Thyroid gland (tissue), 4 donors: ENCODE measurements at regions of chr1 and their contacts with region 1.

Region 1: DNA sequence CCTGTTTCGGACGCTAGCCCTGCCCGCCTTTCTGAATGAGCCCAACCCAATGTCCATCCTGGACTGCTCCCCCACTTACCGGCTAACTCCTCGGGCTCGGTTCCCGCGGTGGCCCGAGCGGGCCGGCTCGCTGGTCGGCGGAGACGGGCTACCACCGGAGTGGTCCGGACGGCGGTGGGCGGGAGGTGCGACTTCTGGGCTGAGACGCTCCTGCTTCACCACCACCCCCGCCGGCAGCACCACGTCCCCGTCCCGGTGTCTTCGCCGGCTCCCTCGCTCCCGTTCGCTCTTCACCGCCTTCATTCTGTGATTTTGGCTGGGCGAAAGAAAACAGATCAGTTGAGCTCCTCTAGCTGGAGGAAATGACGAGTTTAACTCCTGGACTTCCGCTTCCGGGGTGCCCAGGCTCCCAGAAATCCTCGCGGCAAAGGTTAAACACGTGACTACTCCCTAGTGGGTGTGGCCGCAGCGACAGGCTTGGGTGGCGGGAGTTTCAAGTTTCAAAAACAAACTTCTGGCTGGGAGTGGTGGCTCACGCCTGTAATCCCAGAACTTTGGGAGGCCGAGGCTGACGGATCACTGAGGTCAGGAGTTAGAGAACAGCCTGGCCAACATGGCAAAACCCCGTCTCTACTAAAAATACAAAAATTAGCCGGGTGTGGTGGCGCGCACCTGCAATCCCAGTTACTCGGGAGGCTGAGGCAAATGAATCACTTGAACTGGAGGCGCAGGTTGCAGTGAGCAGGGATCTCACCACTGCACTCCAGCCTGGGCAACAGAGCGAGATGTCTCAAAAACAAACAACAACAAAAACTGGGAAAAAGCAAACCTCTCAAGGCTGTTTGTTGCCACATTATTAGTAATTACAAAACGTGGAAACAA is at the start of gene SNIP1:
- DNase-seq: peak; percentile 92 to 94
- H3K4me3 ChIP-seq: peak within 1 kb of the TSS; percentile 97
- H3K27ac ChIP-seq: peak within 1 kb of the TSS; percentile 39 to 79 (median 69)
- H3K4me1 ChIP-seq: peaks cover 21 to 28% of the 10 kb centered on the region in 2 donors
- H3K27me3 ChIP-seq: no peaks in the 10 kb centered on the region
- CTCF ChIP-seq: no peak
- POLR2A ChIP-seq: peak in 1 of 2 donors; percentile 66
- total RNA-seq, gene SNIP1: 8.1 to 16.7 (median 13.0) TPM

Region 2: DNA sequence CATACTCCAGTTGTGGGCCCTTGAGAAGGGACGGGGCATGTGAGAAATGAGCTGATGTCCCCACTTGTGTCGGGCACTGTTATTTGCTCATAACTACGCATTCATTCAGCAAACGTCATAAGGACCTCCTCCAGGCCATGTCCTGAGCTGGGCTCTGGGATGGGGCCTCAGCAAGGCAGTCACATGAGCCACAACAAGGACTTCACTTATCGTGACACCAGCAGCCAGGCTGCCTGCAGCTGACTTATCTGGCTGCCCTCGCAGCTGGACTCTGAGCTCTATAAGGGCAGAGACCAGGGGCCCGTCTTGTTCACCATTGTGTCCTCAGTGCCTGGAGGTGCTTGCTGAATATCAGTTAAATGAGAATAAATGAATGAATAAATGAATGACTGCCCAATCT is 482.3 kb before region 1 on chr1:
- intact Hi-C with region 1: no loop called
- DNase-seq: no peak
- H3K4me3 ChIP-seq: no peak overlapping the region
- H3K27ac ChIP-seq: no peak overlapping the region
- H3K4me1 ChIP-seq: no peaks in the 10 kb centered on the region
- H3K27me3 ChIP-seq: no peaks in the 10 kb centered on the region
- CTCF ChIP-seq: no peak
- POLR2A ChIP-seq: no peak

Region 3: GRCh38 chr1:37692078-37692833 is 138.1 kb after region 1 on chr1 and contains the start of gene CDCA8:
- intact Hi-C with region 1: loop called (anchors 10 kb)
- DNase-seq: peak; percentile 98
- H3K4me3 ChIP-seq: peak within 1 kb of the TSS; percentile 18 to 89 (median 56)
- H3K27ac ChIP-seq: peak within 1 kb of the TSS; percentile 42 to 78 (median 73)
- H3K4me1 ChIP-seq: peaks cover 18 to 26% of the 10 kb centered on the region in 2 donors
- H3K27me3 ChIP-seq: no peaks in the 10 kb centered on the region
- CTCF ChIP-seq: peak in 4 of 6 experiments; percentile 26 to 59 (median 48)
- POLR2A ChIP-seq: peak in 1 of 2 donors; percentile 57
- total RNA-seq, gene CDCA8: 0.33 to 1.2 (median 0.81) TPM